ENCODE measurements at regions of chr10 and their contacts with region 1.

Region 1: DNA sequence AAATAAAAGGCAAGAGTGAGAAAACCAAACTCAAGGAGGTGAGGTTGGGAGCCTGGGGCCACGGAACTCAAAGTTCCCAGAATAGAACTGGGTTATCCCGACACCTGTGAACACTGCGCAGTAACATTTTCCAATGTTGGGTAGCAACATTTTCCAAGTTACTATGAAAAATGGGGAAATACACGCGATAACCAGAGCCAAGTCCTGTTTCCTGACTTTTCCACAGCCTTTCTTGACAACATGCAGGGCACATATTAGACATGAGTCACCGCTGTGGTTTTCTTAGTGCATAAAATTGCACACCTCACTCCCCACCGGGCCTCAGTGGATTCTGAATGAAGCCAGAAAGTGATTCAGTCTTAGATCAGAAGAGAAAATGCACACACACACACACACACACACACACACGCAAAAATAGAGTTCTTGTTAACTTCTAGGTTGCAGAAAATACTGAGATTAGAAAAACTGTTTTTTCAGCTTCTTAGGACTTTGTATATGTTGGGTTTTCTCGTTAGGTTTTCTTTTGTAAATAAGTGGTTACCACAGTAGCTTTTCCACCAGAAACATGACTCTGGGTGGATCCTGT is 70.0 kb downstream of the CAMK1D start:
- DNase-seq: peak; percentile 88
- ATAC-seq: peak; percentile 98
- H3K4me3 Mint-ChIP-seq: peak overlapping the region; percentile 30
- H3K27ac Mint-ChIP-seq: peak overlapping the region; percentile 73
- H3K4me1 Mint-ChIP-seq: peaks cover 36% of the 10 kb centered on the region
- H3K27me3 Mint-ChIP-seq: no peaks in the 10 kb centered on the region

Region 2: GRCh38 chr10:12129222-12130111 is 289.9 kb before region 1 on chr10 and contains the start of gene SEC61A2:
- CTCF ChIA-PET with region 1: no interaction called
- POLR2A ChIA-PET with region 1: no interaction called
- intact Hi-C with region 1: loop called in 1 of 2 experiments (anchors 10 kb)
- DNase-seq: peak; percentile 99
- ATAC-seq: peak; percentile 96
- H3K4me3 Mint-ChIP-seq: peak within 1 kb of the TSS; percentile 81
- H3K27ac Mint-ChIP-seq: peak within 1 kb of the TSS; percentile 76
- H3K4me1 Mint-ChIP-seq: peaks cover 19% of the 10 kb centered on the region
- H3K27me3 Mint-ChIP-seq: no peaks in the 10 kb centered on the region
- total RNA-seq, gene SEC61A2: 11.3 to 12.0 TPM

Region 3: DNA sequence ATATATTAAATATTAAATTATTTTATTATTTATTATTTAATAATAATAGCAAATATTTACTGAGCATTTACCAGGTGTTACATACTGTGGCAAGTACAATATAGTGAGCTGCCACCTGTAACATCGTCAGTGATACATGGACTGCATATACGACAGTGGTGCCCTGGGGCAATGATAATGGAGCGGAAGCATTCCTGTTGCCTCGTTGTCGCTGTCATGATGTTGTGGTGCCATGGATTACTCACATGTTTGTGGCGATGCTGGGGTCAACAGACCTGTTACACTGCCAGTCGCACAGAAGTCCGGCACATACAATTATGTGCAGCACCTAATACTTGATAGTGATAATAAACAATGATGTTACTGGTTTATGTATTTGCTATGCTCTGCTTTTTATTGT is 49.4 kb before region 1 on chr10:
- CTCF ChIA-PET with region 1: no interaction called
- POLR2A ChIA-PET with region 1: interaction called, 3 read pairs
- intact Hi-C with region 1: loop called (anchors 1 to 5 kb)
- DNase-seq: no peak
- ATAC-seq: no peak
- H3K4me3 Mint-ChIP-seq: no peak overlapping the region
- H3K27ac Mint-ChIP-seq: no peak overlapping the region
- H3K4me1 Mint-ChIP-seq: peaks cover 27% of the 10 kb centered on the region
- H3K27me3 Mint-ChIP-seq: no peaks in the 10 kb centered on the region

Region 4: GRCh38 chr10:12381536-12382156 is 37.7 kb before region 1 on chr10:
- CTCF ChIA-PET with region 1: no interaction called
- POLR2A ChIA-PET with region 1: no interaction called
- intact Hi-C with region 1: loop called in 1 of 2 experiments (anchors 1 kb)
- DNase-seq: no peak
- ATAC-seq: peak; percentile 73
- H3K4me3 Mint-ChIP-seq: no peak overlapping the region
- H3K27ac Mint-ChIP-seq: peak overlapping the region; percentile 86
- H3K4me1 Mint-ChIP-seq: peaks cover 33% of the 10 kb centered on the region
- H3K27me3 Mint-ChIP-seq: no peaks in the 10 kb centered on the region

Region 5: GRCh38 chr10:12540341-12540781 is 121.0 kb after region 1 on chr10:
- CTCF ChIA-PET with region 1: no interaction called
- POLR2A ChIA-PET with region 1: no interaction called
- intact Hi-C with region 1: no loop called
- DNase-seq: no peak
- ATAC-seq: peak; percentile 88
- H3K4me3 Mint-ChIP-seq: no peak overlapping the region
- H3K27ac Mint-ChIP-seq: peak overlapping the region; percentile 32
- H3K4me1 Mint-ChIP-seq: peaks cover 25% of the 10 kb centered on the region
- H3K27me3 Mint-ChIP-seq: no peaks in the 10 kb centered on the region